ENCODE measurements at regions of chr2 and their contacts with region 1.

Region 1: GRCh38 chr2:164737612-164738081 is 104.0 kb downstream of the COBLL1 start:
- DNase-seq: peak; percentile 20
- ATAC-seq: peak; percentile 66
- H3K4me3 Mint-ChIP-seq: no peak overlapping the region
- H3K27ac Mint-ChIP-seq: no peak overlapping the region
- H3K4me1 Mint-ChIP-seq: no peaks in the 10 kb centered on the region
- H3K27me3 Mint-ChIP-seq: peaks cover 1% of the 10 kb centered on the region
- CTCF ChIP-seq: peak; percentile 66

Region 2: GRCh38 chr2:164439885-164440284 is 297.8 kb before region 1 on chr2:
- CTCF ChIA-PET with region 1: no interaction called
- POLR2A ChIA-PET with region 1: no interaction called
- intact Hi-C with region 1: no loop called
- DNase-seq: no peak
- ATAC-seq: no peak
- H3K4me3 Mint-ChIP-seq: no peak overlapping the region
- H3K27ac Mint-ChIP-seq: no peak overlapping the region
- H3K4me1 Mint-ChIP-seq: no peaks in the 10 kb centered on the region
- H3K27me3 Mint-ChIP-seq: no peaks in the 10 kb centered on the region
- CTCF ChIP-seq: no peak

Region 3: DNA sequence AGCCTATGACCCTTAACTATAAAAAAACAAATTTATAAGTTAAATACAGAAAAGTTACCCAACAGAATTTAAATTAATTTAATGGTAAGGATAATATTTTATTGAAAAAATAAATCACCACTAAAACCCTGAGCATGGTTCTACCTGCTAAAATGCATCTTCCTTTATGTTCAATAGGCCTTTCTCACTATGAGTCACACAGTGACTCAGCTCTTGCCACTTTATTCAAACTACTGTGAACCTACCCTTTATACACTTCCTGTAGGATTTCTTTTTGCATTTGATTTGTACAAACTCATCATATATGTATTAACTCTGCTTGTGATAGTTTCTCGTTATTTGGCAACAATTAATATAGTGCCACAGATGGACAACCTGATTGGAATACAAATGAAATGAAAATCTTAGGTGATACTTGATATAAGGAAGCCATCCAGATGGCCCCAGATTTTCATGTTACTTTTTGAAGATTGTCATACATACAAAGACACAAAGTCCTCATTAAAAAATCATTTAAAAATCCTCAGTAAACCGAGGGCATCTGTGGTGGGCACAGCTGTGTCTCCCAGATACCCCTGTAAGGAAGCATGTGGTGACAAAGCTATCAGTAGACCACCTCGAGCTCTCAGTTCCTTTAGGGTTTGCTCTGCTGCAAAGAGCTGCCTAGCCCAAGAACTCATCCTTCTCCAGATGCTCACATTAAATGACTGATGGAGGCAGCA is 159.1 kb after region 1 on chr2:
- CTCF ChIA-PET with region 1: no interaction called
- POLR2A ChIA-PET with region 1: no interaction called
- intact Hi-C with region 1: no loop called
- DNase-seq: peak; percentile 31
- ATAC-seq: peak; percentile 90
- H3K4me3 Mint-ChIP-seq: no peak overlapping the region
- H3K27ac Mint-ChIP-seq: no peak overlapping the region
- H3K4me1 Mint-ChIP-seq: peaks cover 6% of the 10 kb centered on the region
- H3K27me3 Mint-ChIP-seq: no peaks in the 10 kb centered on the region
- CTCF ChIP-seq: no peak

Region 4: DNA sequence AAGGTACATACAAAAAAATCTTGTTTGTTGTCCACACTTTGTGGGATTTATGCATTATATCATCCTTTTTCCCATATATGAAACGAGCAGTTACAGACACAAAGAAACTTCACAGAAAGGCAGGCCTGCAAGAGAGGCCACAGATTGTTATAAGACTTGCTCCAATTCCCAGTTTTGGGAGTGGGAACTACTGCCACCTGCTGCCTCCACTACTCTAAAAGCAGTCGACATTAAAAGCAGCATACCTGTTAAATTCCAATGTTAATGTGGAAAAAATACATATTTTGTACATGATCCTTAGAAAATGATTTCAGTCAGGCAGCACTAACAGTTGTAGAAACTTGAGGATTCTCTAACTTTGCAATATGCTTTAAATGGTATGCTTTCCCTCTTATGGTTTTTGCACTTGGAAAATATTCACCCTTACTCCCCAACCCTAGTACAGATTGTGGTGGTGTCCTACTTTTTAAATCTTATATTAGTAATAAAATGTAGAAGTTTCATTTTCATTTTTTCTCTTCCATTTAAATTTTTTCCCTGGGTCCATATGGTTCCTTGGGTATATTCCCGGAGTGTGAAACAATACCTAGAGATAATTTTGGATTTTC is 179.8 kb after region 1 on chr2:
- CTCF ChIA-PET with region 1: no interaction called
- POLR2A ChIA-PET with region 1: no interaction called
- intact Hi-C with region 1: loop called (anchors 10 kb)
- DNase-seq: no peak
- ATAC-seq: no peak
- H3K4me3 Mint-ChIP-seq: no peak overlapping the region
- H3K27ac Mint-ChIP-seq: no peak overlapping the region
- H3K4me1 Mint-ChIP-seq: no peaks in the 10 kb centered on the region
- H3K27me3 Mint-ChIP-seq: peaks cover 1% of the 10 kb centered on the region
- CTCF ChIP-seq: no peak